ENCODE measurements at regions of chr17 and their contacts with region 1.

Region 1: DNA sequence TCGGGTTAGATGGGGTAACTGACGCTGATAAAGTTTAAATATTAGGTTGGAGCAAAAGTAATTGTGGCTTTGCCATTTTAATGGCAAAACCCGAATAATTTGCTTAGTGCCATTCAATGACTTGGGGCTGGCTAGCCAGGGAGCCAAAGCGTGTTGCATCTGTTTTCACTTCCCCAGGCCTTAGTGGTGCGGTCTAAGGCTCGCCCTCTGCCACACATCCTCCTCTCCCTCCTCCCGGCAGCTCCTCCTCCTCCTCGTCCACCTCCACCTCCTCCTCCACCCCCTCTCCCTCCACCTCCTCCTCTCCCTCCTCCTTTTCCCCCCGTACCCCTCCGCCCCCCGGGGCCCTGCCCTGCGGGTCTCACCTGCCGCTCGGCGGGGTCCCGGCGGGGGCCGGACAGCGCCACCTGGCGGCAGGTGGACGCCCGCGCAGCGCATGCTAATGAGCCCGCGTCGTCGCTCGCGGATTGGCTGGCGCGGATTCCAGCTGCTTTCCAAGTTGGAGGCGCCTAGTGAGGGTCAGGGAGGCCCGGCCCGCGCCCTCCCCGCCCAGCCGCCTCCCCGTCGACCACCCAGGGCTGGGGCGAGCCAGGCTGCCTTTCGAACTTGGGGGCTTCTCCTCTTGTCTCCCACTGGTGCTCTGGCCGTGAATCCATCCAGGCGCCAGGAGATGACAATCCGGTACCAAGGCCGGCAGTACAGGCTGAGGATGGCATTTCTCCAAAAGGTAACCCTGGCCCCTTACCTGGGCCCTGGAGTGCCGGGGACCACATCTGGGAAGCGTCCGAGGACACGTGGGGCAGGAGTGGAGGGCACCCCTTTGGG is 36.6 kb upstream of the RGS9 start:
- DNase-seq: peak; percentile 90
- ATAC-seq: peak; percentile 82
- H3K4me3 ChIP-seq: peak overlapping the region; percentile 50 to 65 (median 51)
- H3K4me3 Mint-ChIP-seq: peak overlapping the region; percentile 95
- H3K27ac ChIP-seq: peak overlapping the region; percentile 70 to 81
- H3K27ac Mint-ChIP-seq: peak overlapping the region; percentile 96
- H3K4me1 ChIP-seq: peaks cover 14 to 20% of the 10 kb centered on the region in 2 donors
- H3K4me1 Mint-ChIP-seq: peaks cover 19% of the 10 kb centered on the region
- H3K27me3 ChIP-seq: no peaks in the 10 kb centered on the region
- H3K27me3 Mint-ChIP-seq: no peaks in the 10 kb centered on the region
- CTCF ChIP-seq: peak; percentile 79

Region 2: GRCh38 chr17:64399071-64399766 is 701.3 kb before region 1 on chr17:
- CTCF ChIA-PET with region 1: no interaction called
- POLR2A ChIA-PET with region 1: no interaction called
- intact Hi-C with region 1: no loop called
- DNase-seq: no peak
- ATAC-seq: no peak
- H3K4me3 ChIP-seq: no peak overlapping the region
- H3K4me3 Mint-ChIP-seq: no peak overlapping the region
- H3K27ac ChIP-seq: no peak overlapping the region
- H3K27ac Mint-ChIP-seq: peak overlapping the region; percentile 15
- H3K4me1 ChIP-seq: peaks cover 69 to 73% of the 10 kb centered on the region in 2 donors
- H3K4me1 Mint-ChIP-seq: peaks cover 64% of the 10 kb centered on the region
- H3K27me3 ChIP-seq: no peaks in the 10 kb centered on the region
- H3K27me3 Mint-ChIP-seq: no peaks in the 10 kb centered on the region
- CTCF ChIP-seq: no peak

Region 3: DNA sequence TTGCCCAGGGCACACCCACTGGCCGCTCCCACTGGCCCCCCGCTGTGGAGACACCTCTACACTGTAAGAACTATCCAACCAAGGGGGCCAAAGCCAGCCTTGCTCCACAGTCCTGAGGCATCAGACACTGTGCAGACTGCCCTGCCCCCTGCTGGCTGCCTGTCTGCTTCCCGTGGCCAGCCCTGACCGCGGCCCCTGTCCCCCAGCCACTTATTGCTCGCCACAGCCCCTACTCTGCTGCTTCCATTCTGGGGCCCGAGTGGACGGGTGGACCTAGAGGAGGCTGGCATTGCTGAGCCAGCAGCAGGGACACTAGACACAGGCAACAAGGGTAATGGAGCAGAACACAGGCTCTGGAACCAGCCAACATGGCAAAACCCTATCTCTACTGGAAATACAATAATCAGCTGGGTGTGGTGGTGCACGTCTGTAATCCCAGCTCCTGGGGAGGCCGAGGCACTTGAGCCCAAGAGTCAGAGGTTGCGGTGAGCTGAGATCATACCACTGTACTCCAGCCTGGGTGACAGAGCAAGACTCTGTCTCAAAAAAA is 161.5 kb before region 1 on chr17:
- CTCF ChIA-PET with region 1: interaction called, 10 read pairs
- POLR2A ChIA-PET with region 1: no interaction called
- intact Hi-C with region 1: no loop called
- DNase-seq: peak; percentile 61
- ATAC-seq: peak; percentile 76
- H3K4me3 ChIP-seq: no peak overlapping the region
- H3K4me3 Mint-ChIP-seq: no peak overlapping the region
- H3K27ac ChIP-seq: no peak overlapping the region
- H3K27ac Mint-ChIP-seq: no peak overlapping the region
- H3K4me1 ChIP-seq: peaks cover 0 to 6% of the 10 kb centered on the region in 2 donors
- H3K4me1 Mint-ChIP-seq: peaks cover 4% of the 10 kb centered on the region
- H3K27me3 ChIP-seq: peaks cover 0 to 5% (median 0%) of the 10 kb centered on the region in 4 experiments
- H3K27me3 Mint-ChIP-seq: no peaks in the 10 kb centered on the region
- CTCF ChIP-seq: peak; percentile 68

Region 4: DNA sequence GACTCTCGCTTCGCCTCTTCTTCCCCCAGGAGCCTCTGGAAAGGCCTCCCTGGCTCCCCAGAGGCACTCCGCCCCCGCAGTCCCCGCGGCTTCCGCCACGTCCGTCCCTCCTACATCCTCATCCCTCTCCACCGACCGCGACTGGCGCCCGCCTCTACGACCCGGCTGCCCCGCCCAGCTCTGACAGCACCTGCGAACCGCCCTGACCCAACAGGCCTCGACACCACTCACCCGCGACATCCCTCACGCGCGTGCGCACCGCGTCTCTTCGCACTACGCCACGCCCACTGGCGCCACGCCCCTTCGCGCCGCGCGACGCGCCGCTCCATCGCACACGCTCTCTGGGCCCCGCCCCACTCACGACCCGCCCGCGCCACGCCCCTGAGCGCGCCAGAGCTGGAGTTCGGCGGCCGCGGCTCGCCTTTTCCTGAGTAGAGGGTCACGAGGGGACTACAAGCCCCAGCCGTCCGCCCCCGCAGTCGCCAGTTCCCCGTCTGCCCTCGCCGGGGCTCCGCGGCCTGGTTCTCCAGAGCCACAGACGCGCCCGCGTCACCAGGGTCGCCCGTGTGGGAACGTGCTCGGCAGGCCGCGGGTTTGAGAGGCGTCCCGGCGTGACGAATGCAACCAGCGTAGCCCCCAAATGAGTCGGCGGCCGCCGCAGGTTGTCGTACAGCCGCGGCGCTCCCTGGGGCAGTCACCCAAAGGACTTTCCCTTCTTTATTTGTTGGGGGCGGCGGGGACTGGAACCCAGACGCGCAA is 125.0 kb before region 1 on chr17:
- CTCF ChIA-PET with region 1: interaction called, 17 read pairs
- POLR2A ChIA-PET with region 1: interaction called, 14 read pairs
- intact Hi-C with region 1: loop called (anchors 1 kb)
- DNase-seq: peak; percentile 100
- ATAC-seq: peak; percentile 74
- H3K4me3 ChIP-seq: peak overlapping the region in 4 of 5 experiments; percentile 59 to 77 (median 68)
- H3K4me3 Mint-ChIP-seq: peak overlapping the region; percentile 92
- H3K27ac ChIP-seq: peak overlapping the region; percentile 95 to 99
- H3K27ac Mint-ChIP-seq: peak overlapping the region; percentile 99
- H3K4me1 ChIP-seq: peaks cover 28 to 34% of the 10 kb centered on the region in 2 donors
- H3K4me1 Mint-ChIP-seq: peaks cover 56% of the 10 kb centered on the region
- H3K27me3 ChIP-seq: no peaks in the 10 kb centered on the region
- H3K27me3 Mint-ChIP-seq: no peaks in the 10 kb centered on the region
- CTCF ChIP-seq: no peak

Region 5: DNA sequence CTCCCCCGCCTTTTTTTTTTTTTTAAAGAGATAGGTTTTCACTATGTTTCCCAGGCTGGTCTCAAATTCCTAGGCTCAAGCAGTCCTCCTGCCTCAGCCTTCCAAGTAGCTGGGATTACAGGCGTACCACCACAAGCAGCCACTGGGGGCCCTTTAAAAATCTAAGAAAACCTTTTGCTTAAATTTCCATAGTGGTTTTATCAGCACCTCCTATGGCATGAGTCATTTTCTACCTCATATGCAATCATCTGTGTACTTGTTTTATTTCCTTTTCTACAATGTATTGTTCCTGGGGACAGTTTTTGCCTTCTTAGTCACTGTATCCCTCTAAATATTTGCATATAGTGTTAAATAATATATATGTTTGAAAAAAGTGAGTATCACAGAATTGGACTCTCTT is 73.2 kb before region 1 on chr17:
- CTCF ChIA-PET with region 1: interaction called, 9 read pairs
- POLR2A ChIA-PET with region 1: interaction called, 13 read pairs
- intact Hi-C with region 1: loop called (anchors 1 kb)
- DNase-seq: peak; percentile 57
- ATAC-seq: peak; percentile 42
- H3K4me3 ChIP-seq: no peak overlapping the region
- H3K4me3 Mint-ChIP-seq: peak overlapping the region; percentile 63
- H3K27ac ChIP-seq: peak overlapping the region; percentile 31 to 68
- H3K27ac Mint-ChIP-seq: peak overlapping the region; percentile 87
- H3K4me1 ChIP-seq: peaks cover 71 to 82% of the 10 kb centered on the region in 2 donors
- H3K4me1 Mint-ChIP-seq: peaks cover 89% of the 10 kb centered on the region
- H3K27me3 ChIP-seq: no peaks in the 10 kb centered on the region
- H3K27me3 Mint-ChIP-seq: no peaks in the 10 kb centered on the region
- CTCF ChIP-seq: peak; percentile 74

Region 6: DNA sequence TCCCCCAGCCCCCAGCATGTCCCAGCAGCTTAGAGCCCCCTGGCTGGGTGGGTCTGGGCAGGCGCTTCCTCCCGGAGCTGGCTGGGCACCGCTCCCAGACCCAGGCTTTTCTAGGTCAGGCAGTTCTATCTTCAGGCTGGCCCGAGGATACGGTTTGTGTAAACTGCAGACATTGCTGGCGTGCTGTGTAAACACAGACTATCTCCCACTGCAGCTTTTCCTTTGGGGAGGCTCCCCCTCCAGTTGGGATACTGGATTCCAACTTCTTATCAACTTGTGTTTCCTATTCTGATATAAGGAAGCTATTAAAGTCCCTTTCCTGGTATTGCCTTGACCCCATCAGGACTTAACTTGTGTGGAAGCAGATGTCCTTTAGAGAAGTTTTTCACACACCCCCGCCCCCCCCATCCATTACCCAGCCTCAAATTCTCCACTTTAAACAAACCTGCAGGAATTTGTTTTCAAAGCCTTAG is 25.7 kb before region 1 on chr17:
- CTCF ChIA-PET with region 1: interaction called, 16 read pairs
- POLR2A ChIA-PET with region 1: no interaction called
- intact Hi-C with region 1: no loop called
- DNase-seq: no peak
- ATAC-seq: no peak
- H3K4me3 ChIP-seq: no peak overlapping the region
- H3K4me3 Mint-ChIP-seq: no peak overlapping the region
- H3K27ac ChIP-seq: no peak overlapping the region
- H3K27ac Mint-ChIP-seq: no peak overlapping the region
- H3K4me1 ChIP-seq: no peaks in the 10 kb centered on the region
- H3K4me1 Mint-ChIP-seq: no peaks in the 10 kb centered on the region
- H3K27me3 ChIP-seq: peaks cover 0 to 3% (median 0%) of the 10 kb centered on the region in 4 experiments
- H3K27me3 Mint-ChIP-seq: no peaks in the 10 kb centered on the region
- CTCF ChIP-seq: no peak

Region 7: GRCh38 chr17:65137021-65137991 is 36.8 kb after region 1 on chr17 and contains the start of gene RGS9:
- CTCF ChIA-PET with region 1: interaction called, 14 read pairs
- POLR2A ChIA-PET with region 1: no interaction called
- intact Hi-C with region 1: loop called (anchors 1 kb)
- DNase-seq: peak; percentile 89
- ATAC-seq: peak; percentile 98
- H3K4me3 ChIP-seq: peak within 1 kb of the TSS in 4 of 5 experiments; percentile 32 to 55 (median 49)
- H3K4me3 Mint-ChIP-seq: peak within 1 kb of the TSS; percentile 86
- H3K27ac ChIP-seq: no peak within 1 kb of the TSS
- H3K27ac Mint-ChIP-seq: peak within 1 kb of the TSS; percentile 32
- H3K4me1 ChIP-seq: peaks cover 11 to 13% of the 10 kb centered on the region in 2 donors
- H3K4me1 Mint-ChIP-seq: peaks cover 18% of the 10 kb centered on the region
- H3K27me3 ChIP-seq: peaks cover 0 to 13% (median 8%) of the 10 kb centered on the region in 4 experiments
- H3K27me3 Mint-ChIP-seq: peaks cover 18% of the 10 kb centered on the region
- CTCF ChIP-seq: peak; percentile 85
- total RNA-seq, gene RGS9: 3.4 and 4.4 TPM in 2 replicates